ENCODE measurements at regions of chr18 and their contacts with region 1.

Region 1: DNA sequence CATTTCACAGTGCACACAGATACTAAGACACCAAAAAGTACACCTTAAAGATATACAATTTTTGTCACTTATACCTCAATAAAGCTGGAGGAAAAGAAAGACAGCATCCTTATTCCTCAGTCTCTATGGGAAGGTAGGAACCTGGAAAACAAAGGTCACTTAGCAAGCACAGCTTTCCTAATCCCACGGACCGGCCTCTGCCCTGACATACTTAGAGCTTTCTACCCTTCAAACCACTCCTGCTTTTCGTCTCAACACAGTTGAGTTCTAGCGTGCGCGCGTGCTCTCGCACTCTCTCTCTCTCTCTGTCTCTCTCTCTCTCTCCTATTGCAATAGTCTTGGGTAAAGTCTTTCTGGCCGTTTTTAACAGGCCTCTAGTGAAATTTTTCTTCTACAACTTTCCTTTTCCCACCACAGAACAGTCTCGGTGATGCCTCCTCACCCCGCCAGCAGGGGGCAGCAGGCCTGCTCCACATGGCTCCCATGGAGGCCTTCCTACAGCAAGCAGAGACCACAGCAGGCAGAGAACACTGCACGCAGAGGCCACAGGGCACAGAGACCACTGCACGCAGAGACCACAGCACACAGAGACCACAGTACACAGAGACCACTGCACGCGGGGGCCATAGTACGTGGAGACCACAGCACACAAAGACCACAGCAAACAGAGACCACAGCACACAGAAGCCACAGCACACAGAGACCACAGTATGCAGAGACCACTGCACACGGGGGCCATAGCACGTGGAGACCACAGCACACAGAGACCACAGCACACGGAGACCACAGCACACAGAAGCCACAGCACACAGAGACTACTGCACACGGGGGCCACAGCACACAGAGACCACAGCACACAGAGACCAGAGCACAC is 106.9 kb downstream of the FBXO15 start:
- DNase-seq: no peak
- ATAC-seq: peak; percentile 97
- H3K4me3 ChIP-seq: no peak overlapping the region
- H3K27ac ChIP-seq: no peak overlapping the region
- H3K4me1 ChIP-seq: no peaks in the 10 kb centered on the region
- H3K27me3 ChIP-seq: no peaks in the 10 kb centered on the region; a peak in 1 of 4 replicates
- CTCF ChIP-seq: peak; percentile 62 to 77 (median 73)
- EP300 ChIP-seq: no peak
- POLR2A ChIP-seq: no peak
- RAD21 ChIP-seq: peak; percentile 61

Region 2: GRCh38 chr18:74081966-74082741 is 41.5 kb after region 1 on chr18:
- CTCF ChIA-PET with region 1: no interaction called
- POLR2A ChIA-PET with region 1: no interaction called
- RAD21 ChIA-PET with region 1: no interaction called
- SMC1A ChIA-PET with region 1: no interaction called
- in situ Hi-C with region 1: no loop called
- intact Hi-C with region 1: no loop called
- DNase-seq: peak; percentile 1
- ATAC-seq: peak; percentile 98
- H3K4me3 ChIP-seq: no peak overlapping the region
- H3K27ac ChIP-seq: no peak overlapping the region
- H3K4me1 ChIP-seq: no peaks in the 10 kb centered on the region
- H3K27me3 ChIP-seq: peaks cover 0 to under 1% of the 10 kb centered on the region in 2 experiments; a peak in 2 of 4 replicates
- CTCF ChIP-seq: peak; percentile 42 to 61 (median 51)
- EP300 ChIP-seq: no peak
- POLR2A ChIP-seq: no peak
- RAD21 ChIP-seq: 0 out of 2 replicates have a peak, but pooled peaks have one; percentile 24

Region 3: DNA sequence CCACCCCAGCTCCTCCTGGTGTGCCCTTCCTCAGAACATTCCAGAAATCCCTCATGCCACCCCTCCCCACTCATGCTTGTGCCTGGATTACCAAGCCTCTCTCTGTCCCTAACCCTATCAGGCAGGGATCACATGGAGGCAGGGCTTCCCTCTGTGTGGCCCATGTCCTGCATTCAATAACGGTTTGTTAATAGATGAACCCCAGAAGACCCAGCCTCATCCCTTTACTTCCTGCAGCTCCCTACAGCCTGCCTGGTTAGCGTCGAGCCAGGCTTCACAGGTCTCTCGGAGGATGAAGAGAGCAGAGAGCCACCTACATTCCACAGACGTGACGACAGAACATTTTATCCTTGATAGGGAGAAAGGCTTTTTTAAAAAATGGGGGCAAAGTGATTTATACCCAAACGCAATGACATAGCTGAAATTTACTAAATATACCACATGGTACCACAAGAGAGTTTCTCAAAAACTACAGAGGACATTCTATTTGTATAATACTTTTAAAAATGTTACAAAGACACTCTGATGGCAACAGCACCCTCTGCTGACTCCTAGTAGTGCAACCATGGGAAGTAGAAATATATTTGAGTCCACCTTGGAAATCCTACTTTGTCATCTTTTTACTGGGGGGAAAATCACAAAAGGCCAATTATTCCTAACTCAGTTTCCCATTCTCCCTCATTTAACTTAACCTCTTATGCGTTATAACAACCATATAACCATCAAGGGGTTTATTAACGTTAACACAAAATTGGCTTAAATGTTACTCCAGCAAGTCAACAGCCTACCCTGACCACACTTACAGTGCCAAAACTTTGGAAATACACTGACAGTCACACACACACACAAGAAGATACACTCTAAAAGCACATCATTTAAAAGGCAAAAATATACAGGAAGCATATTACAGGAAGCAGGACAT is 76.2 kb after region 1 on chr18:
- CTCF ChIA-PET with region 1: no interaction called
- POLR2A ChIA-PET with region 1: no interaction called
- RAD21 ChIA-PET with region 1: no interaction called
- SMC1A ChIA-PET with region 1: no interaction called
- in situ Hi-C with region 1: no loop called
- intact Hi-C with region 1: loop called (anchors 5 kb)
- DNase-seq: no peak
- ATAC-seq: peak; percentile 57
- H3K4me3 ChIP-seq: no peak overlapping the region
- H3K27ac ChIP-seq: no peak overlapping the region
- H3K4me1 ChIP-seq: no peaks in the 10 kb centered on the region
- H3K27me3 ChIP-seq: no peaks in the 10 kb centered on the region; a peak in 1 of 4 replicates
- CTCF ChIP-seq: peak; percentile 45 to 52 (median 47); a peak in 5 of 6 replicates
- EP300 ChIP-seq: no peak
- POLR2A ChIP-seq: no peak
- RAD21 ChIP-seq: peak; percentile 70